A549 (cell line): ENCODE measurements at regions of chr2 and their contacts with region 1.

Region 1: DNA sequence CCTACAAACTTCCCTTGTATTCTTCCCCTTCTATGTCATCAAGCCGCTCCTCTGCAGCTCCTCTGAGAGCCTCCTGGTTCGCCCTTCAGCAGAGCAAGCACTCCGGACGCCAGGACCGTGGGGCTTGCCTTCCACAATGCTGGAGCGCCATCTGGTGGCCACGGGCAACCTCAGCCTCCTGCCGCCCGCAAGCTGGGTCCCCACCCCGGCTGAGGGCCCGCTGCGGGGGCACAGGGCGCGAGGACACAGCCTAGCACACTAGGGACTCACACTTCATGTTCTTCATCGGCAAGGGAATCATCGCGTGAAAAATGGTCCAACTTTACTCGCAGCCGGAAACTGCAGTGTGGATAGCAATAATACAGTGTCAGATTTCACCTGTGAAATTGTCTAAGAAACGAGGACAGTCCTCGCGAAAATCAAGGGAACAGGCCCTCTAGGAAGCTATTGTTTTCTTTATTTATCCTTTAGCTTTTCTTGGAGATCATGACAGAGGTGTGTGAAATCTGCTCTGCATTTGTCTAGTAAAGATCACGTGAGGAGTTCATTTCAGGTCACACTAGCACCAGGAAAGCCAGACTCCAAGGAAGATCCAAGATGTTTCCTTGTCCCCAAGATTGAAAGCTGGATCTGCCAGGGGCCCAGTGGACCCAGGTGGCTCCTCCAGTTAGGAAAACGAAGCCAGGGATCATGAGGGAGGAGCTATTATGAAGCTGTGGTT is 5.8 kb downstream of the PRLH start:
- DNase-seq: peak; percentile 92 to 95
- ATAC-seq: peak; percentile 89 to 99
- H3K4me3 ChIP-seq: no peak overlapping the region
- H3K27ac ChIP-seq: peak overlapping the region; percentile 55 to 71; a peak in 5 of 6 replicates
- H3K4me1 ChIP-seq: peaks cover 10% of the 10 kb centered on the region; the same call in 2 of the 3 replicates
- CTCF ChIP-seq: peak; percentile 98
- EP300 ChIP-seq: no peak
- POLR2A ChIP-seq: no peak
- RAD21 ChIP-seq: peak; percentile 99 to 100

Region 2: GRCh38 chr2:237085248-237086221 is 486.6 kb before region 1 on chr2 and contains the start of gene COPS8:
- CTCF ChIA-PET with region 1: interaction called, 23 read pairs
- POLR2A ChIA-PET with region 1: interaction called, 9 read pairs
- DNase-seq: peak; percentile 78 to 94
- ATAC-seq: peak; percentile 99 to 100
- H3K4me3 ChIP-seq: peak within 1 kb of the TSS; percentile 68
- H3K27ac ChIP-seq: peak within 1 kb of the TSS; percentile 84 to 93
- H3K4me1 ChIP-seq: peaks cover 17% of the 10 kb centered on the region
- CTCF ChIP-seq: peak; percentile 33
- EP300 ChIP-seq: no peak
- POLR2A ChIP-seq: peak; percentile 90
- RAD21 ChIP-seq: peak in 1 of 2 experiments; percentile 38; a peak in 3 of 5 replicates
- polyA plus RNA-seq, gene COPS8: 129 and 161 TPM in 2 replicates

Region 3: DNA sequence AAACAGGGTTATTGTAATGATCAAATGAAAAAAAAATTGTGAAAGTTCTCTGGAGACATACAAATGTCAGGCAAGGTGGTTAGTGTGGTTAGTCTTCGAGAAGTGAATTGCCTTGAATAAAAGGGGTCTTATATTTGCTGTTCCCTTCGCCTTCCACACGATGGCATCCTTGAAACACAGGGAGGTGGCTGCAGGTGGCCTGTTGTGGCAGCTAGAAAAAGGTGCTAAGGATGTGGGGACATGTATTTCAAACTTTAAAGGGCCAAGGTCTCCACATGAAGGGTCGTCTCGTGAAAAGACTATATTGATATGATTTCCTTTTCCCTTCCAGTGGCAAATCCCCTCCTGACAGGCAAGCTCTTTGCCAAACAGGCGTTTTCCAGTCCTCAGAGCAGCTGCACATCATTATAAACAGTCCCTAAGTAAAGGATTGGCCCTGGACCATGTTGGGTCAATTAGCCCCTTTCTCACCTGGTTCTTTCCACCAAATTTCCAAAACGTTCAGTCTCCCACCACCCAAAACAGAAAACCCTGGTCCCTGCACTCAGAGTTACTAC is 418.0 kb before region 1 on chr2:
- CTCF ChIA-PET with region 1: interaction called, 23 read pairs
- POLR2A ChIA-PET with region 1: no interaction called
- DNase-seq: peak; percentile 45 to 75
- ATAC-seq: peak; percentile 55 to 83; a peak in 3 of 6 replicates
- H3K4me3 ChIP-seq: no peak overlapping the region
- H3K27ac ChIP-seq: no peak overlapping the region
- H3K4me1 ChIP-seq: no peaks in the 10 kb centered on the region
- CTCF ChIP-seq: peak; percentile 74
- EP300 ChIP-seq: no peak
- POLR2A ChIP-seq: no peak
- RAD21 ChIP-seq: peak; percentile 90 to 98

Region 4: GRCh38 chr2:237250599-237250998 is 321.6 kb before region 1 on chr2:
- CTCF ChIA-PET with region 1: no interaction called
- POLR2A ChIA-PET with region 1: no interaction called
- DNase-seq: no peak
- ATAC-seq: no peak
- H3K4me3 ChIP-seq: no peak overlapping the region
- H3K27ac ChIP-seq: no peak overlapping the region
- H3K4me1 ChIP-seq: peaks cover 31% of the 10 kb centered on the region
- CTCF ChIP-seq: no peak
- EP300 ChIP-seq: no peak
- POLR2A ChIP-seq: no peak
- RAD21 ChIP-seq: no peak

Region 5: DNA sequence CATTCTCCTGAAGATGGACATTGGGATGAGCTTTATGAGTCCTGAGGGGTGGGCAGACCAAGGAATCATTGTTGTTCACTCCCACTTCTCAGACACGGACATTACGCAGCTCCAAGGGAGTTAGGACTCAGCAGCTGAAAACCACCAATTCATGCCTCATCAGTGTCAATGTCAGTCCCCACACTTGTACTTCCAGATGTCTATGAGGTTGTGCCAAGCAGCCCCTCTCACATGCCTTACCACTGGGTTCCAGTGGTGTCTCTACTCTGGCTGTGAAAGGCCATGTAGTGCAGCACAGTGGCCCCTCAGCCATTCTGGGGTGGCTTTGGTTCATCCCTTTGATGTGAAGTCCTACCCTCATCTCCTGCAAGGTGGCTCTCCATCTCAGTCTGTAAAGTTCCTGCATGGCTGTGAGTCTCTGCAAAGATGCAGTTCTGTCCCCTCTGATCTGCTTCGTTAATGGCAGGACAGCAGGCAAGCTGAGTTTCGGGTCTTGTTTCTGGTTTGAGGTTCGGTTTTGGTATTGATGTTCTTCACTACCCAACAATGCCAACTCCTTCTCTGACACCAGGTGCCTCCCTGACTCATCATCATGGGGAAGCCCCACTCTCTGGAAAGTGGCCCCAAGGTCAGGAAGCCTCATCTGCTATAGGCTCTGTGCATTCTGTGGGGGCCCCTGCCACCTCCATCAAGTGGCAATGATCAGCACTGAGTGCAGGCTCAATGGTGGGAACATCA is 144.2 kb before region 1 on chr2:
- CTCF ChIA-PET with region 1: interaction called, 72 read pairs
- POLR2A ChIA-PET with region 1: no interaction called
- DNase-seq: no peak
- ATAC-seq: no peak
- H3K4me3 ChIP-seq: no peak overlapping the region
- H3K27ac ChIP-seq: no peak overlapping the region
- H3K4me1 ChIP-seq: peaks cover 16% of the 10 kb centered on the region
- CTCF ChIP-seq: no peak
- EP300 ChIP-seq: no peak
- POLR2A ChIP-seq: no peak
- RAD21 ChIP-seq: no peak

Region 6: DNA sequence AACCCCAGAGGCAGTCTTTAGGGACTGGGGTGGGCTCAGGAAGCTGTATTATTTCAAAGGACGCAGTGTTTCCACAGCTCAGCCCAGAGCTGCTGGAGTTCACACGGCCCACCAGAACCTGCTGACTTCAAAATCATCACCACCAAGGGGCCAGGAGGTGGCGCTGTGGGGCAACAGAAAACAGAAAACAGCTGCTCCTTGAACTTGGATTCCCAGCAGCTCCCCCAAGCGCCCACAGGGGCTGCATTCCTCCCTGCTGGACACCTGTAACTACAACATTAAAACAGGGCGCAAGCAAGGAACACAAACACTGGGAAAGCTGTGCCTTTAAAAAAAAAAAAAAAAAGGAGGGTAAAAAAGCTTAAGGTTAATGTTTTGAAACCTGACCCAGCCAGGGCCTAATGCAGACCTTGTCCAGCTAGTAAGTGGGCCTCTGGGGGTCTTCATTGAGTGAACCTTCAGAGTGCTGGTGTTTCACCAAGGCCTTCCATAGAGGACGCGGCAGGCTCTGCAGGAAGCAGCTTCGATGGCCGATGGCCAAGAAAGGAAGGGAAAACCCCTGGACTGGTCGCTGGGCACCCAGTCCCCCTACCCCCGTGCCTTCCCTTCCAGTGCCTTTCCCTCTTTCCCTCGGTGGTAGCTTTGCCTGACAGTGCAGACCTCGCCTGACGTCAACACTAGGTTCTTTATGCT is 59.3 kb before region 1 on chr2:
- CTCF ChIA-PET with region 1: interaction called, 146 read pairs
- POLR2A ChIA-PET with region 1: interaction called, 6 read pairs
- DNase-seq: peak; percentile 72 to 90
- ATAC-seq: peak; percentile 83 to 86
- H3K4me3 ChIP-seq: no peak overlapping the region
- H3K27ac ChIP-seq: peak overlapping the region; percentile 97 to 98
- H3K4me1 ChIP-seq: peaks cover 58% of the 10 kb centered on the region
- CTCF ChIP-seq: peak; percentile 96
- EP300 ChIP-seq: no peak
- POLR2A ChIP-seq: no peak
- RAD21 ChIP-seq: peak; percentile 82 to 83

Region 7: DNA sequence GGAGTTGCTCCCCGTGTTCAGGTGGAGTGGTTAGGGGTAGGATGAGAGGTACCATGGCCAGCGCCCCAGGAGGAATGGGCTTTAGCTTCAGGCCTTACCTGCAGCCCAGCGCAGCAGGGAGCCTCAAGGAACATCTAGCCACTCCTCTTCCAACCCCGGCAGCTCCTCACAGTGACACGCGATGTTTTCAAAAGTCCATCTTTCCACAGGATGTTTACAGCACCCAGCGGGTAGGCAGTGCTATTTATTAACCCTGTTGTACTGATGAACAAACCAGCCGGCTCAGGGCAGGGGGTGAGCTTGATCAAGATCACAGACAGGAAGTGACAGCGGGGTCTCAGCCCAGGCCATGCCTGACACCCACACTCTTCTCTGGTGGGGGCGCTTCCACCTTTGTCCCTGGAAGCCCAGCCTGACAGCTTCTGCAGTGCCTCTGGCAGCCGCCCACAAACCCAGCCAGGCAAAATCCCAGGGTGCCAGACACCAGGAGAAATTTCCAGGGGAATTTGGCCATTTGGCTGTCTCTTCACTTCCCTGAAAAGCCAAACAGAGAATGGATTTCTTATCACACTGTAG is 24.3 kb before region 1 on chr2:
- CTCF ChIA-PET with region 1: interaction called, 18 read pairs
- POLR2A ChIA-PET with region 1: no interaction called
- DNase-seq: no peak
- ATAC-seq: 0 out of 6 replicates have a peak, but pooled peaks of 1 of the 2 experiments have one; percentile 10
- H3K4me3 ChIP-seq: no peak overlapping the region
- H3K27ac ChIP-seq: no peak overlapping the region
- H3K4me1 ChIP-seq: no peaks in the 10 kb centered on the region
- CTCF ChIP-seq: no peak
- EP300 ChIP-seq: no peak
- POLR2A ChIP-seq: no peak
- RAD21 ChIP-seq: no peak

Region 8: DNA sequence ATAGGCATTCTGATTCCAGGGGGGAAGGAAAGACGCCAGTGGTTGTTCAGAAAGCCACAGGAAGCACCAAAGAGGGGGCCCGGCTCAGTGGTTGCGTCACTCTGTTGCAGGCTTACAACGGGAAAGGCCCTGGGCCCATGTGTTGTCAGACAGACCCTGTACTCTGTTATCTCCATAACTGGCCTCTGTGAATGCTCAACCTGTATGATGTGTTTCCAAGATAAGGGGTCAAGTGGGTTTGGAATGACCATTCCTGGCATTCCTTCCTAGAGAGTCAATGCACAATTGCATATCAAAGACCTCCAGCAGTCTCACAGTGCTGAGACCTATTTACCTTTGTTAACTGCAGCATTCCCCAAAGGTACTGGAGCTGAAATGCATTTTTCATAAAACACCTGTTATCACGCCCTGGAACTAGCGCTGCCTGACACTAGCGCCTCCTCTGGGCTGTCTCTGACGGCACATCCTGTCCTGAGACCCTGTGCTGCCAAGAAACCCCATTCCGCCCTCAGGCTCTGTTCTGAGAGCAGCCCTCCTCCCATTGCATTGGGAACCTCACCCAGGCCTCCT is 42.1 kb after region 1 on chr2:
- CTCF ChIA-PET with region 1: interaction called, 15 read pairs
- POLR2A ChIA-PET with region 1: no interaction called
- DNase-seq: peak in 1 of 2 experiments; percentile 35
- ATAC-seq: peak; percentile 60 to 78; a peak in 4 of 6 replicates
- H3K4me3 ChIP-seq: no peak overlapping the region
- H3K27ac ChIP-seq: peak overlapping the region in 1 of 2 experiments; percentile 2; a peak in 2 of 6 replicates
- H3K4me1 ChIP-seq: peaks cover 8% of the 10 kb centered on the region
- CTCF ChIP-seq: no peak
- EP300 ChIP-seq: 0 out of 5 replicates have a peak, but pooled peaks of 1 of the 2 experiments have one; percentile 24
- POLR2A ChIP-seq: no peak
- RAD21 ChIP-seq: no peak